Aorta (tissue), 5 donors: ENCODE measurements at regions of chr10 and their contacts with region 1.

Region 1: GRCh38 chr10:21083871-21084295 is 186.8 kb upstream of the NEBL start:
- DNase-seq: no peak
- ATAC-seq: no peak
- H3K4me3 ChIP-seq: no peak overlapping the region
- H3K27ac ChIP-seq: no peak overlapping the region
- H3K4me1 ChIP-seq: no peaks in the 10 kb centered on the region
- H3K27me3 ChIP-seq: no peaks in the 10 kb centered on the region

Region 2: DNA sequence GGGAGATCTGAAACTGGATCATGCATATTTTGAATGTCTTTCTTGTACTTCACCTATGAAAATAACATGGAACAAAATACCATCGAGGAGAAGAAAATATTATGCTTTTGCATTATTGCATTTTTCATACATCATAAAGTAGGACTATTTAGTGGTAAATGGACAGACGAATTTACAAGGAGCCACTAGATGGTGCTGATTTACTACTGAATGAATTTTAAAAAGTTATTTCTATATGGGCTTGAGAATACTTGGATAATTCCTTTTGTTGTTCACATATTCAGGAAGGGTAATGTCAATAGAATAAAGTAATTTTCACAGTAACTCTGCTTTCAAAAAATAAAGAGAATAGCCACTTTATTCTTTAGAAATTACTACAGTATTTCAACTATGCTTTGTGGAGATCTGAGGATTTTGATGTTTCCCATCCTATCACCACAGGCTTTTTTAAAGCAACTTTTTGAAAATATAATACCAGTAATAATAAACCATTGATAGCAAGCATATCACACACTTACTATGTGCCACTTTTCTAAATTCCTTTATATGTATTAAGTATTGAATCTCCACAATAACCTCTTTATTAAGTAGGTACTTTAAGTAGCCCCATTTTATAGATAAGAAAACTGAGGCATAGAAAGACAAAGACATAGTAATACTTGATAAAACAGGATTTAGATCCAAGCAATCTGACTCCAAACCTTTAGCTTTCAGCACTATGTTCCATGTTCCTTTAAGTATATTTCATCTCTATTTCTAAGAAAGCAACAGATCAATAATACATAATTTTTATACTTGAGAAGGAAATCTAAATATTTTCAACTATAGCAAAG is 225.4 kb before region 1 on chr10:
- intact Hi-C with region 1: no loop called
- DNase-seq: no peak
- ATAC-seq: no peak
- H3K4me3 ChIP-seq: no peak overlapping the region
- H3K27ac ChIP-seq: no peak overlapping the region
- H3K4me1 ChIP-seq: no peaks in the 10 kb centered on the region
- H3K27me3 ChIP-seq: no peaks in the 10 kb centered on the region

Region 3: GRCh38 chr10:21265621-21266020 is 181.7 kb after region 1 on chr10:
- intact Hi-C with region 1: loop called in 1 of 2 experiments (anchors 5 kb)
- DNase-seq: no peak
- ATAC-seq: no peak
- H3K4me3 ChIP-seq: no peak overlapping the region
- H3K27ac ChIP-seq: no peak overlapping the region
- H3K4me1 ChIP-seq: no peaks in the 10 kb centered on the region
- H3K27me3 ChIP-seq: no peaks in the 10 kb centered on the region

Region 4: DNA sequence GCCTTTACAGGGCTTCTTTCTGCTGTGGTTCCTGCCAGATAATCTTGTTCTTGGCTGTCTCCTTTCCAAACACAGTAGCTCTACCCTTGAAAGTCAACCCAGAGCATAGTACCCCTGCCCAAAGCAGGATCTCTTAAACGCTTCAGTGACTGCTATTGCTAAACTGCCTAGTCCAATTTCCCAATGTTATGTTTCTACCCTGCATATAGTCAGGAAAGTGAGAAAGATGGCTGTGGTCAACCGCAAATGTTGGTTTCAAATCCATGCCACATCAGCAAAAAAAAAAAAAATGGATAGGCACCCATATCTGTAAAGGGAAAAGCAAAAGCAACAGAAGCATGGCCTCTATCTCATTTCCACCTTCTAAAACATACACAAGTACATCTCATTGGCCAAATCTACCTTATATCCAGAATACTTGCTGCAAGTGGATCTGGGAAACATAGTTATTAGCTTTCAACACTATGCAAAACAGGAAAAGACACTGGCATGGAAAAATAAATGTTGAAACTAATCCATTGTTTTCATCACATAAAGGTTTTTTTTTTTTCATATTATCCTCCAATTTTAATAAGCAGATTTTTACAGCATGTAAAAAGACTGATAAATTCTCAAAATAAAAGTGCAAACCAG is 859.9 kb after region 1 on chr10:
- intact Hi-C with region 1: loop called in 1 of 2 experiments (anchors 10 kb)
- DNase-seq: no peak
- ATAC-seq: no peak
- H3K4me3 ChIP-seq: no peak overlapping the region
- H3K27ac ChIP-seq: no peak overlapping the region
- H3K4me1 ChIP-seq: no peaks in the 10 kb centered on the region
- H3K27me3 ChIP-seq: no peaks in the 10 kb centered on the region